Right ventricle myocardium superior (tissue), 1 donor: ENCODE measurements at regions of chr3 and their contacts with region 1.

Region 1: DNA sequence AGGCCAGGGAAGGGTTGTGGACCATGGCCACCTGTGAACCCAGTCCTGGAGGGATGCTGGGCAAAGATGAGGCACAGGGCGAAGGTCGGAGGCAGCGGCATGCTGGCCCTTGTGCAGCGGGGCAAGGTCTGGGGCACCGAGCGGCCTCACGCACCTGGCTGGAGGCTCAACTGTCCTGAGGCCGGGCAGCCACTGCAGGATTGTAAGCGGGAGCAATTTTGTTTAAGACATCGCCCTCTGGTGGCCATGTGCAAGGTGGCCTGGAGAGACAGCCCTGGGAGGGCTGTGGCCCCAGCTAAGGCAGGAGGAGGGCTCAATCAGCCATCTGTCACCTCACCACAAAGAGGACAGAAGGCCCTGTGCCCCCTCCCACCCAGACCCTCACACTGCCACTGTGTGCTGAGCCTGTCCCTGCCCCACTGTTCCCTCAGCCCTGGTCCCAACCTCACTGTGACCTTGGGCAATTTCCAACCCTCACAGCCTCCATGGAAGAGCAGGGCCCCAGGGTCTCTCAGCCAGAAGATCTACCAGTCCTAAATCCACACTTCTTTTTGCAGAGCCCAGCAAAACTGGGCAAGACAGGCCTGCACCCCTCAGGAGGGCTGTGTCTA is 46.2 kb downstream of the TPRA1 start:
- DNase-seq: peak; percentile 79
- ATAC-seq: peak; percentile 38

Region 2: GRCh38 chr3:126522363-126522788 is 1021.9 kb before region 1 on chr3:
- intact Hi-C with region 1: loop called (anchors 10 kb)
- DNase-seq: peak; percentile 68
- ATAC-seq: peak; percentile 49

Region 3: GRCh38 chr3:127608362-127608718 is 64.0 kb after region 1 on chr3:
- intact Hi-C with region 1: no loop called
- DNase-seq: peak; percentile 81
- ATAC-seq: peak; percentile 86